Heart left ventricle (tissue), 16 donors: ENCODE measurements at regions of chr20 and their contacts with region 1.

Region 1: DNA sequence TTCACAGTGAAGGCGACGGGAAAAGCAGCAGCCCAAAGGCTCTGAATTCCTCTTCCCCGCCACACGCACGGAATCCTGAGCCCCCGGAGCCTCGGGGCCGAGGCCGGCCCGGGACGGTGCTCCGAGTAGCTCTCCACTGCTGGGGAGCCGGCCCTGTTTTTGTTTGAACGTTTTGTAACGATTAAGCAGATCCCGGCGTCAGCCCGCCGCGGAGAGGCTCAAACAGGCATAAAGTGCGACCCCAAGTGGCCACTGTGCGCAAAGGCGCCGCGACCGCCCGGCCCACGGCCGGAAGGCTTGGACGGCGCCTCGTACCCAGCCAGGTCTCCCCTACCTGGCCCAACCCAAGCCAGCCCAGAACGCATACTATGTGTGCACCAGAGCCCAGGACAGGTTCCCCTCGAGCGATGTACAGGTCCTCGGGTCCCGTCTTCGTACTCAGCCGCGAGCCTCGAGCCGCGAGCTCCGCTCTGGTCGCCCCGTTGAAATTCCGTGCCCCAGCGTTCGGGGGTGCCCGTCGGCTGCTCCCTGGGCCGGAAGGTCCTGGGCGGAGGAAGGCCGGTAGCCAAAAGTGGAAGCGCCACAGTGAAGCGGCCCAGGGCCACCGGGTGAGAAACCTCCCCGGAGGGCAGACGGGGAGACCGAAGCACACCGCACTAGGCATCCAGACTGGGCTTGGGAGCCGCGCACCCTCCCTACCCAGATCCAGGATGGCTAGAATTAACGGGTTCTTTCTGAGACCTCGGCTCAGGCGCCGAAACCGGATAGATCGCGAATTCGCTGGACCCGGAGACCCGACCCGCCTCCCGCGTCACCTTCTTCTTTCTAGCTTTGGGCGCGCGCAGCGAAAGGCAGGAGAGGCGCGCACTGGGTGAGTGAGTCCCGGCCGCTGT is 1.2 kb upstream of the MAFB start:
- DNase-seq: peak; percentile 89 to 95 (median 91)
- ATAC-seq: peak; percentile 59 to 78 (median 65)
- H3K4me3 ChIP-seq: peak overlapping the region; percentile 36 to 86 (median 70)
- H3K27ac ChIP-seq: peak overlapping the region; percentile 92 to 99 (median 98)
- H3K4me1 ChIP-seq: peaks cover 0 to 53% (median 20%) of the 10 kb centered on the region in 12 donors
- H3K27me3 ChIP-seq: peaks cover 29 to 69% (median 51%) of the 10 kb centered on the region in 9 donors
- CTCF ChIP-seq: peak; percentile 90 to 97 (median 96)
- POLR2A ChIP-seq: no peak

Region 2: GRCh38 chr20:39892983-39893685 is 797.1 kb before region 1 on chr20:
- intact Hi-C with region 1: loop called in 9 of 10 experiments (anchors 5 to 10 kb)
- DNase-seq: no peak
- ATAC-seq: peak in 3 of 4 donors; percentile 41 to 93 (median 67)
- H3K4me3 ChIP-seq: no peak overlapping the region
- H3K27ac ChIP-seq: peak overlapping the region in 2 of 12 donors; percentile 14 to 22
- H3K4me1 ChIP-seq: peaks cover 0 to 4% (median 0%) of the 10 kb centered on the region in 12 donors
- H3K27me3 ChIP-seq: no peaks in the 10 kb centered on the region
- CTCF ChIP-seq: peak in 3 of 12 donors; percentile 4 to 16 (median 7)
- POLR2A ChIP-seq: no peak

Region 3: GRCh38 chr20:40160097-40160550 is 530.1 kb before region 1 on chr20:
- intact Hi-C with region 1: loop called in 8 of 10 experiments (anchors 1 to 10 kb)
- DNase-seq: peak in 4 of 5 donors; percentile 17 to 41 (median 30)
- ATAC-seq: peak; percentile 51 to 76 (median 66)
- H3K4me3 ChIP-seq: no peak overlapping the region
- H3K27ac ChIP-seq: no peak overlapping the region
- H3K4me1 ChIP-seq: no peaks in the 10 kb centered on the region
- H3K27me3 ChIP-seq: peaks cover 0 to 3% (median 0%) of the 10 kb centered on the region in 9 donors
- CTCF ChIP-seq: peak; percentile 52 to 75 (median 68)
- POLR2A ChIP-seq: no peak

Region 4: GRCh38 chr20:40265825-40266533 is 424.2 kb before region 1 on chr20:
- intact Hi-C with region 1: loop called (anchors 1 to 5 kb)
- DNase-seq: peak in 1 of 5 donors; percentile 33
- ATAC-seq: peak in 2 of 4 donors; percentile 55 to 66
- H3K4me3 ChIP-seq: no peak overlapping the region
- H3K27ac ChIP-seq: peak overlapping the region in 1 of 12 donors; percentile 9
- H3K4me1 ChIP-seq: peaks cover 0 to 25% (median 0%) of the 10 kb centered on the region in 12 donors
- H3K27me3 ChIP-seq: peaks cover 0 to 3% (median 0%) of the 10 kb centered on the region in 9 donors
- CTCF ChIP-seq: peak in 11 of 12 donors; percentile 20 to 63 (median 41)
- POLR2A ChIP-seq: no peak

Region 5: GRCh38 chr20:40317156-40317797 is 372.9 kb before region 1 on chr20:
- intact Hi-C with region 1: loop called in 1 of 10 experiments (anchors 5 kb)
- DNase-seq: no peak
- ATAC-seq: no peak
- H3K4me3 ChIP-seq: no peak overlapping the region
- H3K27ac ChIP-seq: no peak overlapping the region
- H3K4me1 ChIP-seq: peaks cover 0 to 5% (median 0%) of the 10 kb centered on the region in 12 donors
- H3K27me3 ChIP-seq: peaks cover 0 to 3% (median 0%) of the 10 kb centered on the region in 9 donors
- CTCF ChIP-seq: no peak
- POLR2A ChIP-seq: no peak